ENCODE measurements at regions of chr11 and their contacts with region 1.

Region 1: DNA sequence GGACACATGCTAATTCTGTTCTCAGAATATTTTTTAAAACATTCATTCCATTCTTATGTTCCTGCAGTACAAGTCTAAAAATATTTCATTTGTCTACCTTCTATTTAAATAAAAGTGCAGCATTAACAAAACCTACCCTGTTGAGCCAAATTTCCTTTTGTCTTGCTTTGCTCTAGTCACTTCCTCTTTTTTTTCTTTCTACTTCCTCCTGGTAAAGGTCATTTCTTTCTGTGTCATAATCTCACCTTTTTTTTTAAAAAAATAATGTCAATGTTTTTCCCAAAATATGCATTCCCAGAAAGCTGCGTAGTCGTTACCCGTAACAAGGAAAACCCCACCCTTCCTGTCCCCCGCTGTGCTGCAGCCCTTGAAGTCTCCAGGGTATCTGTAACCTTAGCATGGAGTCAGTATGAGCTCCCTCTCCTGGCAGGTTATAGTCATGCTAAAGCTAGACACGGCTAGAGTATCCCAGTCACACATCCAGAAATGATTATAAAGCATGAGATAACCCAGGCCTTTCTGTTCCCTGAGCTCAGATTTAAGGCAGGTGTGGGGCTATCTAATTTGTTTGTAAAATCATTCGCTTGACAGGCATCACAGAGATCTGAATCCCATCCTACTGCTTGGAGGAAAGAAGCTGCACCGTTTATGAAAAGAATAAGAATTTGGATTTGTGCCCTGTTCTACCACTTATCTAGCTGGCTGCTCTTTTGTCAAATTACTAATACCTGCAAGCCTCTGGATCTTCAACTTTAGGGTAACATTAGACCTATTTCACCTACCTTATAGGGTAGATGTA is 51.1 kb upstream of the EED start:
- DNase-seq: peak; percentile 78
- ATAC-seq: peak; percentile 97
- H3K4me3 ChIP-seq: peak overlapping the region; percentile 49; the same call in 1 of the 2 replicates
- H3K27ac ChIP-seq: peak overlapping the region; percentile 34
- H3K4me1 ChIP-seq: peaks cover 14% of the 10 kb centered on the region
- H3K27me3 ChIP-seq: no peaks in the 10 kb centered on the region
- CTCF ChIP-seq: peak; percentile 65 to 83 (median 76)
- EP300 ChIP-seq: peak in 1 of 2 experiments; percentile 48; a peak in 1 of 4 replicates
- POLR2A ChIP-seq: no peak
- RAD21 ChIP-seq: peak; percentile 85

Region 2: GRCh38 chr11:86035164-86035563 is 158.3 kb before region 1 on chr11:
- CTCF ChIA-PET with region 1: interaction called, 154 read pairs
- POLR2A ChIA-PET with region 1: no interaction called
- RAD21 ChIA-PET with region 1: interaction called, 5 read pairs
- SMC1A ChIA-PET with region 1: interaction called, 126 read pairs
- in situ Hi-C with region 1: loop called (anchors 5 kb)
- intact Hi-C with region 1: no loop called
- DNase-seq: no peak
- ATAC-seq: peak; percentile 18
- H3K4me3 ChIP-seq: no peak overlapping the region
- H3K27ac ChIP-seq: no peak overlapping the region
- H3K4me1 ChIP-seq: peaks cover 2% of the 10 kb centered on the region
- H3K27me3 ChIP-seq: no peaks in the 10 kb centered on the region
- CTCF ChIP-seq: no peak
- EP300 ChIP-seq: no peak
- POLR2A ChIP-seq: no peak
- RAD21 ChIP-seq: no peak

Region 3: GRCh38 chr11:86068951-86069407 is 124.5 kb before region 1 on chr11 and contains the start of gene PICALM:
- CTCF ChIA-PET with region 1: interaction called, 76 read pairs
- POLR2A ChIA-PET with region 1: interaction called, 26 read pairs
- RAD21 ChIA-PET with region 1: interaction called, 64 read pairs
- SMC1A ChIA-PET with region 1: interaction called, 66 read pairs
- in situ Hi-C with region 1: no loop called
- intact Hi-C with region 1: loop called (anchors 2 kb)
- DNase-seq: peak; percentile 97
- ATAC-seq: peak; percentile 80
- H3K4me3 ChIP-seq: peak within 1 kb of the TSS; percentile 95
- H3K27ac ChIP-seq: peak within 1 kb of the TSS; percentile 99
- H3K4me1 ChIP-seq: peaks cover 10% of the 10 kb centered on the region
- H3K27me3 ChIP-seq: no peaks in the 10 kb centered on the region
- CTCF ChIP-seq: no peak
- EP300 ChIP-seq: peak in 1 of 2 experiments; percentile 14; a peak in 1 of 4 replicates
- POLR2A ChIP-seq: peak; percentile 81
- RAD21 ChIP-seq: no peak
- polyA plus RNA-seq, gene PICALM: 4.3 to 10.4 TPM

Region 4: DNA sequence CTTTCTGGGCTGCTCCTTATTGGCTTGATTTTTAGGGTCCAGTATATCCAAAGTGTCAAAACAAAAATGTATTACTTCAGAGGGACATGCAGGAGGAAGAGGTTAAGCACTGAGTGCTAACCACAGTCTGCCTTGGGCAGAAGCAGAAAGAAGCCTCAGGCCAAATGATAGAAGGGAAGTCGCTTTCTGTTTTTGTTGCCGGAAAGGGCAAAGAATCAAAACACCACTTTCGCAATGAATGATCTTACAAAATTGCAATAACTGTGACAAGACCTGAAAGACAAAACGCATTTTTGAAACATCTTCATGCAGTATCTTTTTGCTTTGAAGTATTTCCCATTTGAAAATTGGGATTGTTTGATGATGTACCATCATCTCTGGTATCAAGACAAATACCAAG is 54.5 kb before region 1 on chr11:
- CTCF ChIA-PET with region 1: interaction called, 17 read pairs
- POLR2A ChIA-PET with region 1: no interaction called
- RAD21 ChIA-PET with region 1: interaction called, 5 read pairs
- SMC1A ChIA-PET with region 1: interaction called, 4 read pairs
- in situ Hi-C with region 1: no loop called
- intact Hi-C with region 1: no loop called
- DNase-seq: peak; percentile 84
- ATAC-seq: peak; percentile 92
- H3K4me3 ChIP-seq: peak overlapping the region; percentile 55; the same call in 1 of the 2 replicates
- H3K27ac ChIP-seq: peak overlapping the region; percentile 67
- H3K4me1 ChIP-seq: peaks cover 11% of the 10 kb centered on the region; the same call in 1 of the 2 replicates
- H3K27me3 ChIP-seq: no peaks in the 10 kb centered on the region
- CTCF ChIP-seq: no peak
- EP300 ChIP-seq: no peak; a peak in 1 of 4 replicates
- POLR2A ChIP-seq: no peak
- RAD21 ChIP-seq: no peak

Region 5: GRCh38 chr11:86182976-86183584 is 10.4 kb before region 1 on chr11:
- CTCF ChIA-PET with region 1: interaction called, 12 read pairs
- POLR2A ChIA-PET with region 1: interaction called, 3 read pairs
- RAD21 ChIA-PET with region 1: interaction called, 4 read pairs
- SMC1A ChIA-PET with region 1: interaction called, 13 read pairs
- in situ Hi-C with region 1: no loop called
- intact Hi-C with region 1: no loop called
- DNase-seq: peak; percentile 88
- ATAC-seq: peak; percentile 92
- H3K4me3 ChIP-seq: no peak overlapping the region
- H3K27ac ChIP-seq: no peak overlapping the region
- H3K4me1 ChIP-seq: peaks cover 12% of the 10 kb centered on the region
- H3K27me3 ChIP-seq: no peaks in the 10 kb centered on the region
- CTCF ChIP-seq: no peak
- EP300 ChIP-seq: peak in 1 of 2 experiments; percentile 9; a peak in 1 of 4 replicates
- POLR2A ChIP-seq: no peak
- RAD21 ChIP-seq: no peak

Region 6: DNA sequence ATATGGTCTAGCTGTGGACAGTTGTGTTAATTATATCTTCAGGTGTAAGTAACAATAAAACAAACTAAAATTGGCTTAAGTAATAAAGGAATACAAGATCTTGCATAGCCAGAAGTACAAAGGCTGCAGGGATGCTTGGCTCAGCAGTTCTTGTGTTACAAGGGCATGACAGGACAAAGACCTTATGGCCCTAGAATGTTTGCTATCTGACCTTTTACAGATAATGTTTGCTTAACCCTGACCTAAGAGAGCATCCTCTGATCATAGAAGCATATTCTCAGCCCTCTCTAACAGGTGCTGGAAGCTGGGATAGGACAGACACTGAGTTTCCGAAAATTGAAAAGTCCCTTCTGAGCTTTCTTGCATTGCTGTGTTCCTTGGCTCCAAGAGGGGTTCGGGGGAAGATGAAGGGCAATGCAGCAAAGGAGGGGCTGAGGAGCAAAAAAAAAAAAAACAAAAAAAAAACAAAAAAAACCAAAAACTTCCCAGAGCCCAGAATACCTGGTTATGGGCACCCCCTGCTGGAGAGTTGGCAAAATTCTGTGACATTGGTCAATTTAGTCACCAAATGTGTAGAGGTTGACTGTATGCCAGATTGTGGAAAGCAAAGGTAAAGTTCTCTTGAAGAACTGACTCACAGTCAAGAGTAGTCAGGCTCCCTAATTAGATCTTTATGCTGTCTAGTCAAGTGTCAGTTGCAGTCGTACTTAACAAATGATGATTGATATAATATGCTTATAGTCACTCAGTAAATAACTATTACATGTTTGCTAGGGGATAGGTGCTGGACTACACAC is 98.2 kb after region 1 on chr11:
- CTCF ChIA-PET with region 1: interaction called, 17 read pairs
- POLR2A ChIA-PET with region 1: interaction called, 5 read pairs
- RAD21 ChIA-PET with region 1: interaction called, 4 read pairs
- SMC1A ChIA-PET with region 1: interaction called, 15 read pairs
- in situ Hi-C with region 1: no loop called
- intact Hi-C with region 1: no loop called
- DNase-seq: peak; percentile 27
- ATAC-seq: peak; percentile 48
- H3K4me3 ChIP-seq: no peak overlapping the region
- H3K27ac ChIP-seq: no peak overlapping the region; the same call in 1 of the 2 replicates
- H3K4me1 ChIP-seq: peaks cover 41% of the 10 kb centered on the region
- H3K27me3 ChIP-seq: no peaks in the 10 kb centered on the region
- CTCF ChIP-seq: peak; percentile 70 to 79 (median 71)
- EP300 ChIP-seq: no peak
- POLR2A ChIP-seq: no peak
- RAD21 ChIP-seq: peak; percentile 95